ENCODE measurements at regions of chr4 and their contacts with region 1.

Region 1: GRCh38 chr4:54233277-54233696 is 4.2 kb downstream of the PDGFRA start:
- DNase-seq: peak; percentile 93
- ATAC-seq: peak; percentile 84
- H3K4me3 ChIP-seq: peak overlapping the region; percentile 67
- H3K27ac ChIP-seq: no peak overlapping the region
- H3K4me1 ChIP-seq: peaks cover 29% of the 10 kb centered on the region
- H3K27me3 ChIP-seq: peaks cover 38% of the 10 kb centered on the region
- CTCF ChIP-seq: peak; percentile 74

Region 2: DNA sequence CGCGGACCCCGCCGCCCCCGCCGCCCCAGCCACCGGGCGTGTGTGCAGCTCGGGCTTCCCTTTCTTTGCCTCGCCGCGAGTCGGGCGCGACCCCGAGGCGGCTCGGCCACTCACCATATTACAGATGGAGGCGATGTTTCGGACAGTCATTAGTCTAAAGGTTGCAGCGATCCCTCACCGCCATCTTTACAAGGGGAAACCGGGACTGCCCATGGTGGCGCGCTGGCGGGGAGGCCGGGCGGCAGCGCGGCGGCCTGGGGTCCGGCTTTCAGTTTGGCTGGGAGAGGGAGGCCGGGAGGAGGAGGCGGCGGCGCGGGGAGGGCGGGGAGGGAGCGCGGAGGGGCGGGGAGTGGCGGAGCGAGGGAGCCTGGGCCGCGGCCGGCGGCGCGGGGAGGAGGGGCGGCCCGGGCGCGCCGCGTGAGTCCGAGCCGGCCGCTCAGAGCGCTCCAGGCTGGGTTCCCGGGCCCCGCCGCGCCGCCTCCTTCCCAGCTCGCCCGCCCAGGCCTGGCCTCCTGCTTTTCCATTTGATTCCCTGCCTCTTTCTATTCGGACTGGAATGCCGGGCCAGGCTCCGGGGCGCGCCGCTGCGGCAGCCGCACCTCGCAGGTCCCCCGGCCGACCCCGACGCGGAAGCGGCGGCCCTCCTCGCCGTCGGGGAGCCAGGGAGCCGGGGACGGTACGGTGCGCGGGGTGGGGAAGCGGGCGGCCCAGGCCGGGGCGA is 1574.1 kb before region 1 on chr4 and contains the start of gene USP46:
- CTCF ChIA-PET with region 1: no interaction called
- POLR2A ChIA-PET with region 1: no interaction called
- intact Hi-C with region 1: loop called (anchors 10 kb)
- DNase-seq: peak; percentile 77
- ATAC-seq: peak; percentile 89
- H3K4me3 ChIP-seq: peak within 1 kb of the TSS; percentile 90
- H3K27ac ChIP-seq: peak within 1 kb of the TSS; percentile 18; the same call in 1 of the 2 replicates
- H3K4me1 ChIP-seq: peaks cover 16% of the 10 kb centered on the region
- H3K27me3 ChIP-seq: no peaks in the 10 kb centered on the region
- CTCF ChIP-seq: no peak
- total RNA-seq, gene USP46: 9.2 and 9.4 TPM in 2 replicates

Region 3: DNA sequence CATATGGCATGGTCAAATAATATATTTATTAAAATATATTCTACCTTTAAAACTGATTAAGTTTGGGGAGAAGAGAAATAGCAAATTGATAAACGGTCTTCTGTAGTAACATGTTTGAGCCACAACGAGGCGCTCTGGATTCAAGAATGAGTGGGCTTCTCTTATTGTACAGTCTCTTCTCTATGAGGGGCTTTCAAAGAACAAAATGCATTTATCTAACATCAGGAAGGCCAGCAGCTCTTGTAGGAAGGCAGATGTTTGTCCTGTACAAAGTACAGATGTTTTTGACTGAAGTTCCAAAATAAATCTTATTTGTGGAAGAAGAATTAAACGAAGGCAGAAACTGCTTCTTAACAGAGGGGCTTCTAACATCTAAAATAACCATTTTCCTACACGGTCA is 1217.6 kb before region 1 on chr4:
- CTCF ChIA-PET with region 1: interaction called, 5 read pairs
- POLR2A ChIA-PET with region 1: no interaction called
- intact Hi-C with region 1: loop called (anchors 1 kb)
- DNase-seq: peak; percentile 53
- ATAC-seq: no peak
- H3K4me3 ChIP-seq: no peak overlapping the region
- H3K27ac ChIP-seq: no peak overlapping the region
- H3K4me1 ChIP-seq: peaks cover 7% of the 10 kb centered on the region
- H3K27me3 ChIP-seq: no peaks in the 10 kb centered on the region
- CTCF ChIP-seq: peak; percentile 83

Region 4: DNA sequence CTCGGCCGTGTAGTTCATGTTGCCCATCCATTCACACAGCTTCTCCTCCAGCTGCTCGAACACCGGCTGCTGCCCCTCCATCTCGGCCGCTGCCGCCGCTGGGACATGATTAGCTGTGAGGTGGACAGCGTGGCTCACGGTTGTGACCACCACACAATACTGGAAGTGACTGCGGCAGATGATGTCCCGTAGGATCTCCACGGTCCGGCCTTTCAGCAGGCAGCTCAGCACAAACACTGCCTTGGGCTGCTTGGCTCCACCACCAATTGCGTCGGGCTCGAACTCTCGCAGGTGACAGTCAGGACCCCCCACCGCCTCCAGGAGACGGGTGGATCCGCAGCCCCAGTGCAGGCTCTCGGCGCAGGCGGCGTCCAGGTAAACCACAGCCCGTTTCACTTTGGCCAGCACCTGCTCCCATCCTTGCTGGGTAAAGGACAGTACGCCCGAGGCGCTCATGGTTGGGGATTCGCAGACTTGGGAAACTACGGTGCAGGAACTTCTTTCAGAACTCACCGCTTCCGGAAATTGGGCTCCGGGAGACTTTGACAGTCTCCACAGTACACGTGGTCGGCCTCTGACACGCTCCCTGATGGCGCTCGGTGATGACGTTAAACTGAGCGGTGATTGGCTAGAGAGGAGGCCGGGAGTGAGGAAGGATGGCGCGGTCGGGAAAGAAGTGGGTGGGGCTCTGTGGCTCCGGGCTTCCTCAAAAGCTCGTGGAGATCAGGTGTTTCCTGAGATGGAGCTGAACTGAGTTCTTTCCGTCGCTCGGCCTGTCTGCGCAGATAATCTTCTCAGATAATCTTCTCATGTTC is 867.6 kb before region 1 on chr4 and contains the start of gene SCFD2:
- CTCF ChIA-PET with region 1: no interaction called
- POLR2A ChIA-PET with region 1: no interaction called
- intact Hi-C with region 1: loop called (anchors 5 kb)
- DNase-seq: peak; percentile 100
- ATAC-seq: peak; percentile 92
- H3K4me3 ChIP-seq: peak within 1 kb of the TSS; percentile 95
- H3K27ac ChIP-seq: peak within 1 kb of the TSS; percentile 51
- H3K4me1 ChIP-seq: peaks cover 34% of the 10 kb centered on the region
- H3K27me3 ChIP-seq: no peaks in the 10 kb centered on the region
- CTCF ChIP-seq: no peak
- total RNA-seq, gene SCFD2: 36.6 and 40.7 TPM in 2 replicates

Region 5: GRCh38 chr4:53702334-53703266 is 530.7 kb before region 1 on chr4:
- CTCF ChIA-PET with region 1: interaction called, 8 read pairs
- POLR2A ChIA-PET with region 1: no interaction called
- intact Hi-C with region 1: loop called (anchors 2 kb)
- DNase-seq: peak; percentile 86
- ATAC-seq: peak; percentile 88
- H3K4me3 ChIP-seq: peak overlapping the region; percentile 63
- H3K27ac ChIP-seq: peak overlapping the region; percentile 88
- H3K4me1 ChIP-seq: peaks cover 34% of the 10 kb centered on the region
- H3K27me3 ChIP-seq: no peaks in the 10 kb centered on the region
- CTCF ChIP-seq: 0 out of 2 replicates have a peak, but pooled peaks have one; percentile 15

Region 6: GRCh38 chr4:53914313-53915016 is 318.8 kb before region 1 on chr4:
- CTCF ChIA-PET with region 1: interaction called, 22 read pairs
- POLR2A ChIA-PET with region 1: no interaction called
- intact Hi-C with region 1: no loop called
- DNase-seq: peak; percentile 99
- ATAC-seq: peak; percentile 87
- H3K4me3 ChIP-seq: peak overlapping the region; percentile 4; the same call in 1 of the 2 replicates
- H3K27ac ChIP-seq: peak overlapping the region; percentile 88
- H3K4me1 ChIP-seq: peaks cover 50% of the 10 kb centered on the region
- H3K27me3 ChIP-seq: no peaks in the 10 kb centered on the region
- CTCF ChIP-seq: no peak